ENCODE measurements at regions of chr16 and their contacts with region 1.

Region 1: DNA sequence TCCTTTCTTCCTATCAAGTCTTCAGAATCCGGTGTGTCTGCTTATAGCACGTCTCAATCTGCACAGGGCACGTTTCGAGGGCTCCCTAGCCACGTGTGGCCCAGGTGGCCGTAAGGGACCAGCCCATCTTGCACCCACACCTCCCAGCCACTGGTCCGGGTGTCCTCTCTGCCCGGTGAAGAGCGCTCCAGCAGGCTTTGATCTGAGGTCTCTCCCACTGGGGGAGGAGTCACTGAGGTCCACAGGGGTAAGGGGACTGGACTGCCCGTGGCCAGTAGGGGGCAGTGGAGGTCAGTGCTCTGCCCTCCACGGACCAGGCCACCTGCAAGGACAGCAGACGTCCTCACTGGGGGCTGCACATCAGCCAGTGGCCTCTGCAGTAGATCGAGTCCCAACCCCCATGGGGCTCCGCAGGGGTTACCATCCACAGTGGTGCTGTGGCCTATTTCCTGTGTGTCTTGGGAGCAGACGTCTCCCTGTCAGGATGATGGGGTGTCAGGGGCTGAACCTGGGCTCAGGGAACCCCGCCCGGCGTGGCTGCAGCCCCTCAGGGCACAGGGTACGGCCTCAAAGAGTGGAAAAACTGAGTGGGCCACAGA is 204.1 kb upstream of the CIBAR2 start:
- DNase-seq: peak in 6 of 10 donors; percentile 51 to 79 (median 59)
- H3K4me3 ChIP-seq: no peak overlapping the region
- H3K27ac ChIP-seq: peak overlapping the region in 3 of 59 donors; percentile 18 to 53 (median 44)
- H3K27me3 ChIP-seq: no peaks in the 10 kb centered on the region
- CTCF ChIP-seq: peak; percentile 27 to 95 (median 87)

Region 2: GRCh38 chr16:85369741-85370528 is 53.5 kb after region 1 on chr16:
- intact Hi-C with region 1: loop called in 1 of 2 experiments (anchors 5 kb)
- DNase-seq: peak in 4 of 10 donors; percentile 49 to 60 (median 53)
- H3K4me3 ChIP-seq: no peak overlapping the region
- H3K27ac ChIP-seq: no peak overlapping the region
- H3K27me3 ChIP-seq: peaks cover 0 to 4% (median 0%) of the 10 kb centered on the region in 45 donors
- CTCF ChIP-seq: peak; percentile 25 to 81 (median 71)